Activated CD8-positive, alpha-beta T cell treated with anti-CD3 and anti-CD28 coated beads, Interleukin-2, amount 10 ng/mL, durations not matched to agents 7 days and 5 days (primary cell): ENCODE measurements at regions of chr1 and their contacts with region 1.

Region 1: GRCh38 chr1:109643385-109644230 is 12.3 kb upstream of the GSTM4 start:
- DNase-seq: peak; percentile 93
- ATAC-seq: peak; percentile 98
- H3K4me3 Mint-ChIP-seq: no peak overlapping the region
- H3K27ac Mint-ChIP-seq: peak overlapping the region; percentile 25
- H3K4me1 Mint-ChIP-seq: peaks cover 18% of the 10 kb centered on the region
- H3K27me3 Mint-ChIP-seq: peaks cover 8% of the 10 kb centered on the region

Region 2: GRCh38 chr1:109539676-109540075 is 103.9 kb before region 1 on chr1 and contains the start of gene GPR61:
- CTCF ChIA-PET with region 1: interaction called, 191 read pairs
- POLR2A ChIA-PET with region 1: no interaction called
- DNase-seq: peak; percentile 16
- ATAC-seq: no peak
- H3K4me3 Mint-ChIP-seq: no peak within 1 kb of the TSS
- H3K27ac Mint-ChIP-seq: peak within 1 kb of the TSS; percentile 6
- H3K4me1 Mint-ChIP-seq: no peaks in the 10 kb centered on the region
- H3K27me3 Mint-ChIP-seq: peaks cover 5% of the 10 kb centered on the region
- total RNA-seq, gene GPR61: not detected

Region 3: DNA sequence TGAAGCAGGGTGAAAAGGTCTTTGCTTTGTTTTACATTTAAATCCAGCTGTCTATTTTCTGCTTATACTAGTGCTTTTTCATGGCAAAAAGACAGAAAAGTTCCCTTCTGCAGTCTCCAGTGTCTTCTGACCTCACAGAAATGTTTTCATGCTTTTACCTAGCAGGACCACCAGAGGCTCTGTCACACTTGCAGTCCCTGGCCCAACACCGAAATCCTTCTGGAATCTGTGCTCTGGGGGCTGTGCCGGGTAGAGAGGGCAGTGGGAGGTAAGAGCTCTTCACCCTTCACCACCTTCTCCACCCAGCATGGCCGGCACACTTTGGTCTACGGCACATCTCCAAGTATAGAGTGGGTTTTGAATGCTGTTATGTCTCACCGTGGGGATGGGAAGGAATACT is 45.0 kb before region 1 on chr1:
- CTCF ChIA-PET with region 1: interaction called, 17 read pairs
- POLR2A ChIA-PET with region 1: no interaction called
- DNase-seq: no peak
- ATAC-seq: no peak
- H3K4me3 Mint-ChIP-seq: no peak overlapping the region
- H3K27ac Mint-ChIP-seq: no peak overlapping the region
- H3K4me1 Mint-ChIP-seq: peaks cover 3% of the 10 kb centered on the region
- H3K27me3 Mint-ChIP-seq: no peaks in the 10 kb centered on the region

Region 4: DNA sequence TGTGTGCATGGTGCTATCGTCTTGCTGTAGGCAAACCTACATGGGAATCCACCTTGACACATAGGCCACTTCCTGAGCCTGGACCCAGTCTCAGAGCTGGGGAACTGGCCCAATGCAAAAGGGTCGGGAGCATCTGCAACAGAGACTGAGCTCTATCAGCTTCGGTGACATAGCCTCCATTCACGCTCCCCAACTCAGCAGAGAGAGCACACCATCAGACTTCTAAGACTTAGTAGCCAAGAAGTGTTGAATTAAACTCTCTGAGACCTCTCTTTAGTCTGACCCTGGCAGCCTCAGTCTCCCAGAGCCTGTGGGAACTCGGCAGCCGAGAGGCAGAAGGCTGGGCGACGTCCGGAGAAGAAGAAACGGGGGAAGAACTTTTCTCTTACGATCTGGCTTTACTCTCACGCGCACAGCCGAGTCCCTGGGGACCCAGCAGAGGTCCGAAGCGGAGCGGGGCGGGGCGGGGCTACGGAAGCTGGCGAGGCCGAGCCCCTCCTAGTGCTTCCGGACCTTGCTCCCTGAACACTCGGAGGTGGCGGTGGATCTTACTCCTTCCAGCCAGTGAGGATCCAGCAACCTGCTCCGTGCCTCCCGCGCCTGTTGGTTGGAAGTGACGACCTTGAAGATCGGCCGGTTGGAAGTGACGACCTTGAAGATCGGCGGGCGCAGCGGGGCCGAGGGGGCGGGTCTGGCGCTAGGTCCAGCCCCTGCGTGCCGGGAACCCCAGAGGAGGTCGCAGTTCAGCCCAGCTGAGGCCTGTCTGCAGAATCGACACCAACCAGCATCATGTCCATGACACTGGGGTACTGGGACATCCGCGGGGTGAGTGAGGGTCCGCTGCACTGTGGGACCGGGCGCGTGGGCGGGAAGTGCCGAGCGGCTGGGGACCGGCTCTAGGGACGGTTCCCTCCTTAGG is 12.3 kb after region 1 on chr1 and contains the start of gene GSTM4:
- CTCF ChIA-PET with region 1: interaction called, 163 read pairs
- POLR2A ChIA-PET with region 1: no interaction called
- DNase-seq: peak; percentile 77
- ATAC-seq: peak; percentile 97
- H3K4me3 Mint-ChIP-seq: peak within 1 kb of the TSS; percentile 82
- H3K27ac Mint-ChIP-seq: peak within 1 kb of the TSS; percentile 87
- H3K4me1 Mint-ChIP-seq: peaks cover 17% of the 10 kb centered on the region
- H3K27me3 Mint-ChIP-seq: peaks cover 29% of the 10 kb centered on the region
- total RNA-seq, gene GSTM4: 17.0 to 18.5 TPM

Region 5: GRCh38 chr1:109739738-109740660 is 96.4 kb after region 1 on chr1:
- CTCF ChIA-PET with region 1: interaction called, 11 read pairs
- POLR2A ChIA-PET with region 1: no interaction called
- DNase-seq: peak; percentile 86
- ATAC-seq: peak; percentile 99
- H3K4me3 Mint-ChIP-seq: peak overlapping the region; percentile 79
- H3K27ac Mint-ChIP-seq: peak overlapping the region; percentile 79
- H3K4me1 Mint-ChIP-seq: peaks cover 14% of the 10 kb centered on the region
- H3K27me3 Mint-ChIP-seq: peaks cover 22% of the 10 kb centered on the region

Region 6: GRCh38 chr1:109783429-109783831 is 139.8 kb after region 1 on chr1:
- CTCF ChIA-PET with region 1: interaction called, 340 read pairs
- POLR2A ChIA-PET with region 1: no interaction called
- DNase-seq: no peak
- ATAC-seq: no peak
- H3K4me3 Mint-ChIP-seq: no peak overlapping the region
- H3K27ac Mint-ChIP-seq: no peak overlapping the region
- H3K4me1 Mint-ChIP-seq: peaks cover 30% of the 10 kb centered on the region
- H3K27me3 Mint-ChIP-seq: no peaks in the 10 kb centered on the region

Region 7: GRCh38 chr1:110011527-110012041 is 368.0 kb after region 1 on chr1:
- CTCF ChIA-PET with region 1: interaction called, 25 read pairs
- POLR2A ChIA-PET with region 1: no interaction called
- DNase-seq: peak; percentile 58
- ATAC-seq: peak; percentile 95
- H3K4me3 Mint-ChIP-seq: no peak overlapping the region
- H3K27ac Mint-ChIP-seq: peak overlapping the region; percentile 19
- H3K4me1 Mint-ChIP-seq: peaks cover 3% of the 10 kb centered on the region
- H3K27me3 Mint-ChIP-seq: no peaks in the 10 kb centered on the region